Left cardiac atrium (tissue), 4 donors: ENCODE measurements at regions of chr9 and their contacts with region 1.

Region 1: GRCh38 chr9:76490249-76490990 is 31.4 kb downstream of the GCNT1 start:
- DNase-seq: no peak
- ATAC-seq: peak in 1 of 2 donors; percentile 14

Region 2: GRCh38 chr9:76530458-76531110 is 40.2 kb after region 1 on chr9:
- intact Hi-C with region 1: loop called in 1 of 2 experiments (anchors 10 kb)
- DNase-seq: peak; percentile 34
- ATAC-seq: peak; percentile 23 to 44

Region 3: DNA sequence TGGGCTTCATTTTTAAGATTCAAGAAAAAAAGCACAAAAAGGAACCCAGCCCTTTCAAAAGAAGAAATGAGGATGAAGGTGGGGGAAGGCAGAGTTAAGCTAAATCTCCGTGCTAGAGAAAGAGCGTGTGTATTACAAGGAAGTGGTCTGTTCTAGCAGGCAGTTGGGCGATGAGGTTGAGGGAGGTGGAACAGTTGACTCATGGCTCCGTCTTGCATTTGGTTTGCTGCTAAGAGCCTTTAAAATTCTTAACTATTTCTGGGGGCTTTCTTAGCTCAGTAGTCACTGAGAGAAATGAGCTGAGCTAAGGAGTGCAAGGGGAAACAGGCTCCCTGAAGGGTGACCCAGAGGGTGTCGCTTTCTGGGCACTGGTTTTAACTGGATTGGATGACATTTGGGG is 85.9 kb after region 1 on chr9:
- intact Hi-C with region 1: loop called in 1 of 2 experiments (anchors 10 kb)
- DNase-seq: no peak
- ATAC-seq: peak; percentile 53 to 69

Region 4: GRCh38 chr9:76586390-76587314 is 96.2 kb after region 1 on chr9:
- intact Hi-C with region 1: no loop called
- DNase-seq: no peak
- ATAC-seq: no peak